Caco-2 (cell line): ENCODE measurements at regions of chr16 and their contacts with region 1.

Region 1: GRCh38 chr16:88487920-88488851 is 35.1 kb downstream of the ZFPM1 start:
- DNase-seq: peak; percentile 98 to 99
- H3K4me3 ChIP-seq: peak overlapping the region; percentile 21
- H3K4me3 Mint-ChIP-seq: peak overlapping the region; percentile 84
- H3K27ac Mint-ChIP-seq: peak overlapping the region; percentile 99
- H3K4me1 ChIP-seq: peaks cover 70% of the 10 kb centered on the region
- H3K4me1 Mint-ChIP-seq: peaks cover 32% of the 10 kb centered on the region
- H3K27me3 ChIP-seq: no peaks in the 10 kb centered on the region
- H3K27me3 Mint-ChIP-seq: no peaks in the 10 kb centered on the region
- CTCF ChIP-seq: peak; percentile 34 to 91

Region 2: GRCh38 chr16:88452482-88453216 is 35.5 kb before region 1 on chr16:
- CTCF ChIA-PET with region 1: interaction called, 8 read pairs
- POLR2A ChIA-PET with region 1: interaction called, 6 read pairs
- intact Hi-C with region 1: loop called (anchors 1 kb)
- DNase-seq: peak; percentile 97 to 100
- H3K4me3 ChIP-seq: peak overlapping the region; percentile 60
- H3K4me3 Mint-ChIP-seq: peak overlapping the region; percentile 97
- H3K27ac Mint-ChIP-seq: peak overlapping the region; percentile 84
- H3K4me1 ChIP-seq: peaks cover 25% of the 10 kb centered on the region
- H3K4me1 Mint-ChIP-seq: peaks cover 6% of the 10 kb centered on the region
- H3K27me3 ChIP-seq: no peaks in the 10 kb centered on the region
- H3K27me3 Mint-ChIP-seq: no peaks in the 10 kb centered on the region
- CTCF ChIP-seq: no peak